Calu3 (cell line): ENCODE measurements at regions of chr1 and their contacts with region 1.

Region 1: DNA sequence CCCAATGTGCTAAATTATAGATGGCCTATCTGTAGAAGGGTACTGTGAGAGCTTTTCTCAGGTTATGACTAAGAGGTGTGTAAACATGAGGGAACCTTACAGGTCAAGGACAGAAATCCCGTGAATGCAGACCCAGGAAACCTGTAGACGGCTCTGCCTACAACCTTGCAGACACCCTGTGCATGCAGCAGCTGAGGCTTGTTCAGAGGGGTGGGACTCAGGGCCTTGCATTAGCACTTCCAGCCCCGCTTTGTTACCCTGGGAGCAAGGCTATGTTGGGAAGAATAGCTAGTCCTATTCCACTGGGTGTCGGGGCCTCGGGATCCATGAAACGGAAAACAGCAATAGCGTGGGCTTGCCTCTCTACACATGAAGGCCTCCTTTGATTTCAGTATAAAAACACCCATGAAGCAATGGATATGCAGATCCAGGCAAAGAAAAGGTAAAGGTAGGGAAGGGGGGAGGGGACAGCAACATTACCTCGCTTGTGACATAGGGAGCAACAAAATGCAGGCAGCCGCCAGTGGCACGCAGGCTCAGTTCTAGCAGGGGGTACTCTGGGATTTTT is 9.5 kb upstream of the NDUFS5 start:
- DNase-seq: peak; percentile 10
- H3K4me3 Mint-ChIP-seq: no peak overlapping the region
- H3K27ac Mint-ChIP-seq: no peak overlapping the region
- H3K4me1 Mint-ChIP-seq: peaks cover 11% of the 10 kb centered on the region
- H3K27me3 Mint-ChIP-seq: no peaks in the 10 kb centered on the region
- CTCF ChIP-seq: no peak

Region 2: GRCh38 chr1:38605063-38605462 is 411.6 kb before region 1 on chr1:
- CTCF ChIA-PET with region 1: no interaction called
- intact Hi-C with region 1: no loop called
- DNase-seq: no peak
- H3K4me3 Mint-ChIP-seq: no peak overlapping the region
- H3K27ac Mint-ChIP-seq: no peak overlapping the region
- H3K4me1 Mint-ChIP-seq: no peaks in the 10 kb centered on the region
- H3K27me3 Mint-ChIP-seq: peaks cover 63% of the 10 kb centered on the region
- CTCF ChIP-seq: no peak

Region 3: DNA sequence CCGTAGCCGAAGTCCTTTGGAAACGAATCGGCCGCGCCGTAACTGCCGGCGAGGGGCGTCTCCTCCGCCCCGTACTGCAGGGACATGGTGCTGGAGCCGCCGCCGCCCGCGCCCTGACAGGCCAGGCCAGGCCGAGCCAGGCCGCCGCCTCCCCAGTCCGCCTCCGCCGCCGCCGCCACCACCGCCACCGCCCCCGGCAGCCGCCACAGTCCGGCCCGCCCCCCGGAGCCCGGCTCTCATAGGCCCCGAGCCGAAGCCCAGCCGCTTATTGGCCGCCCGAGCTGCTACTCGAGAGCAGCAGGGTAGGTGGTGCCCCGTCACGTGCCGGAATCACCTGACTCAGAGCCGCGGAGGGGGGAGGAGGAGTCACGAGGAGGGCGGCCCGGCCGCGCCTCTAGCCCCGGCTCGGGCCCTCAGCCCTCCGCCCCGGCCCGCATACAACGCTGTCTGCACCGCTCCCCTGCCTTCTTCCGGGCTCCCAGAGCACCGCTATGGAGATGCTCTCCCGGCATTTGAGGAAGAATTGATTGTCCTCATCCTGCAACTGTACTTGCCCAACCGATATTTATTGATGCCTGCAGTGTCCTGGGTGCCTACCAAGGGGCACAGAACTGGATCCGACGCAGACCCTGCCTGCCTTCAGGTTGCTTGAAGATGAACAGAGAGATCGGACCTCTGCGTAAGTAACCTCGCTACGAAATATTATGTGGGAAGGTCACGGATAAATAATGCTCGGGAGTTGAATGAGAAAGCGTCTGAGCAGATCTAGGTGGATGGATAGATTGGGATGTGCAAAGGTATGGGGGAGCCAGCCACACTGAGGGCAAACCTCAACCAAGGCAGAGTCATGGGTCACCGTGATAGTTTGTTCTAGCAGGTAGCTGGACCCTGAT is 156.9 kb before region 1 on chr1 and contains the start of gene RRAGC:
- CTCF ChIA-PET with region 1: no interaction called
- intact Hi-C with region 1: loop called (anchors 2 kb)
- DNase-seq: peak; percentile 99
- H3K4me3 Mint-ChIP-seq: peak within 1 kb of the TSS; percentile 91
- H3K27ac Mint-ChIP-seq: peak within 1 kb of the TSS; percentile 74
- H3K4me1 Mint-ChIP-seq: peaks cover 8% of the 10 kb centered on the region
- H3K27me3 Mint-ChIP-seq: no peaks in the 10 kb centered on the region
- CTCF ChIP-seq: no peak
- total RNA-seq, gene RRAGC: 23.7 and 25.9 TPM in 2 replicates

Region 4: GRCh38 chr1:39422614-39423013 is 405.9 kb after region 1 on chr1:
- CTCF ChIA-PET with region 1: no interaction called
- intact Hi-C with region 1: no loop called
- DNase-seq: no peak
- H3K4me3 Mint-ChIP-seq: peak overlapping the region; percentile 11
- H3K27ac Mint-ChIP-seq: peak overlapping the region; percentile 25
- H3K4me1 Mint-ChIP-seq: peaks cover 77% of the 10 kb centered on the region
- H3K27me3 Mint-ChIP-seq: no peaks in the 10 kb centered on the region
- CTCF ChIP-seq: no peak